Caco-2 (cell line): ENCODE measurements at regions of chr6 and their contacts with region 1.

Region 1: DNA sequence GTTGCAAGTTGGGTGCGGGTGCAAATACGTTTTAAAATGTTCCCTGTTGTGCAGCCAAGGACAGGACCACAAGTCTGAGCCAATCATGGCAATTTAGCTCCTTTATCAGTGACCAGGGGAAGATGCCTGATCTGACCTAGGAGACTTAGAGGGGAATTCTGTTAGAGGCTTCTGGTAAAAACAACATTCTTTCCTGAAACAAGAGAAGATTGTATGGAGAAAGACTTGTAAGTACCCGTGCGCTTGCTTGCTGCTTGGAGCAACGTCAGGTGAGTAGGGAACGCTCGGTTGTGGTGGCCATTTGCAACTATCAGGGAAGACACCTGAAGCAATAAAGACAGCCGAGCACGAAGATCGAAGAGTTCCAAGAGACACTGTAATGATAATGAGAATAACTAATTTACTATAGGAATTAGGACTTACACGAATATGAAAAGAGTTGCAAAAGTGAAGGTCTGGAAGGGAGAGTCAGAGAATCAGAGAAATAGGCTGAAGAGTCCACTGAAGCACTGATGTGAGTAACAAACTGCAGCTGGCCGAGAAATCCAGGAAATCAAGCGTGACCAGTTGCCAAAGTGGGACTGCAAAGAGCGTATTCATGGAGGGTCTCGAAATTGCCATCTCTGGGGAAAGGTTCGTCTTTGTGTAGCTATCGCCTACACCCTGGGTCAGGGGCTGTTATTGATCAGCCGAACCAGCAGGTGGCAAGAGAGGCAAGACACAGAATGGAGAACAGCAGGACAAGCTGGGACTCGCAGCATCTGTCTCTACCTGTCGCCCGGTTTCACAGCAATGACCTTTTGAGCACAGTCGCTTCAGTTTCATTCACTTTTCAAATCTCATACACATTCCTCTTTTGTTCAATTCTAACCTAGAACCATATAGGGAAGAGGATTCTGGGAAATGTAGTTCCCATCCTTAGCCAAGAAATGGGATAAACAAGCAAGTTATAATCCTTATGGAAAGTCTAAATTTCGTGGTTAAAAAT is 26.1 kb downstream of the LOC128125822 start:
- DNase-seq: peak; percentile 87 to 88
- H3K4me3 ChIP-seq: peak overlapping the region; percentile 59
- H3K4me3 Mint-ChIP-seq: peak overlapping the region; percentile 99
- H3K27ac Mint-ChIP-seq: peak overlapping the region; percentile 93
- H3K4me1 ChIP-seq: peaks cover 3% of the 10 kb centered on the region; the same call in 1 of the 2 replicates
- H3K4me1 Mint-ChIP-seq: peaks cover 6% of the 10 kb centered on the region
- H3K27me3 ChIP-seq: no peaks in the 10 kb centered on the region
- H3K27me3 Mint-ChIP-seq: no peaks in the 10 kb centered on the region
- CTCF ChIP-seq: peak; percentile 86 to 91

Region 2: DNA sequence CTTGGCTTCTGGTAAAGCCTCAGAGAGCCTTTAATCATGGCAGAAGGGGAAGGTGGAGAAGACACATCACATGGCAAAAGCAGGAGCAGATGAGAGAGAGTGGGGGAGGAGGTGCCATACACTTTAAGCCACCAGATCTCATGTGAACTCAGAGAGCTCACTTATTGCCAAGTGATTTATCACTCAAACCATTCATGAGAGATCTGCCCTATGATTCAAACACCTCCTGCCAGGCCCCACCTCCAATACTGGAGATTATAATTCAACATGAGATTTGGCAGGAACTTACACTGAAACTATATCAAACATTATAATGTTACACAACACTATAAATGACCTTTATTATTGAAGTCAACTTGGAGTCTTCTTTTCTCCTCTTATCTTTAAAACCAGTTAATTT is 339.2 kb before region 1 on chr6:
- CTCF ChIA-PET with region 1: no interaction called
- POLR2A ChIA-PET with region 1: no interaction called
- intact Hi-C with region 1: no loop called
- DNase-seq: no peak
- H3K4me3 ChIP-seq: no peak overlapping the region
- H3K4me3 Mint-ChIP-seq: no peak overlapping the region
- H3K27ac Mint-ChIP-seq: no peak overlapping the region
- H3K4me1 ChIP-seq: no peaks in the 10 kb centered on the region
- H3K4me1 Mint-ChIP-seq: no peaks in the 10 kb centered on the region
- H3K27me3 ChIP-seq: no peaks in the 10 kb centered on the region
- H3K27me3 Mint-ChIP-seq: no peaks in the 10 kb centered on the region
- CTCF ChIP-seq: no peak

Region 3: GRCh38 chr6:63635588-63636517 is 37.5 kb after region 1 on chr6 and contains the start of gene PHF3:
- CTCF ChIA-PET with region 1: interaction called, 11 read pairs
- POLR2A ChIA-PET with region 1: interaction called, 3 read pairs
- intact Hi-C with region 1: loop called (anchors 1 kb)
- DNase-seq: peak; percentile 92 to 94
- H3K4me3 ChIP-seq: peak within 1 kb of the TSS; percentile 85
- H3K4me3 Mint-ChIP-seq: peak within 1 kb of the TSS; percentile 100
- H3K27ac Mint-ChIP-seq: peak within 1 kb of the TSS; percentile 96
- H3K4me1 ChIP-seq: no peaks in the 10 kb centered on the region; the same call in 1 of the 2 replicates
- H3K4me1 Mint-ChIP-seq: peaks cover 8% of the 10 kb centered on the region
- H3K27me3 ChIP-seq: no peaks in the 10 kb centered on the region
- H3K27me3 Mint-ChIP-seq: no peaks in the 10 kb centered on the region
- CTCF ChIP-seq: peak in 1 of 2 experiments; percentile 31
- total RNA-seq, gene PHF3: 41.6 and 48.3 TPM in 2 replicates

Region 4: DNA sequence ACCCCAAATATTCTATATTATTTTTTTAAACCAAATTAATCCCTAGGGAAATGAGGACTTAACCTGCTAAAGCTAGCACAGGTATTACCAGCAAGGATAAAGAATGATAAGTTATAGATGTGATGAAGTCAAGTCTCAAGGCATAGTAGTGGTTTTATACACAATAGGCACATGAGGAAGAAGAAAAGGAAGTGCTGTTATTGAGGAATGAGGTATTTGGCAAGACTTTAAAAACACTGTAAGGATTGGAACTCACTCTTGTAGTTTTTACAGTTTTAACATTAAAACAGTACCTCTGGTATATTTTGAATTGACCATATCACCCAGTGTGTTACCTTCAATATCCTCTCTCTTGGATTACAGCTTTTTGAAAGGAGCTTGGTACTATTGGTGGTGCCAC is 91.9 kb after region 1 on chr6:
- CTCF ChIA-PET with region 1: no interaction called
- POLR2A ChIA-PET with region 1: no interaction called
- intact Hi-C with region 1: loop called (anchors 10 kb)
- DNase-seq: no peak
- H3K4me3 ChIP-seq: no peak overlapping the region
- H3K4me3 Mint-ChIP-seq: no peak overlapping the region
- H3K27ac Mint-ChIP-seq: no peak overlapping the region
- H3K4me1 ChIP-seq: no peaks in the 10 kb centered on the region
- H3K4me1 Mint-ChIP-seq: no peaks in the 10 kb centered on the region
- H3K27me3 ChIP-seq: no peaks in the 10 kb centered on the region
- H3K27me3 Mint-ChIP-seq: no peaks in the 10 kb centered on the region
- CTCF ChIP-seq: no peak

Region 5: DNA sequence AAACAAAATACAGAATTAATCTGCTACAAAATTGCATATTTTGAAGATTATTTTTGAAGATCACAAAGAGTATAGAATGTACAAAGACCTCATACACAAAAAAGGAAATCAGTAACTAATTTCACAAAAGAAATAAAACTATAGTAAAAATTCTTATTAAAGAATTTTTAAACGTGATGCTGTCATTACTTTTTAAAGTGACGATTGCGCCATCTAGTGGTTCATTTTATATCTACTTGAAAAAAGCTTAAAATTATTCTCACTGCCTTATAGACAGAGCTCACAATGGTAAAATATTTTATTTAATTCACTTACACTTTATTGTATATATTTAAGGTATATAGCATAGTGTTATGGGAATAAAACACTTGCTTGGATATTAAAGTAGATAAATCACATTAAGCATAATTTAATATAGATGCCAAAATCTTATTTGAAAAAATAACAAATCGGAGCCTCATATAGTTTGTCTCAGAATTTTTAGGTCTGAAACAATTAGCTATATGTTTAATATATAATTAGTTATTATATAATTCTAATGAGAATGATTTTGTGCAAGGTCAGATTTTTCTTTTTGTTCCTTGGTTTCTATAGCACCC is 166.1 kb after region 1 on chr6:
- CTCF ChIA-PET with region 1: interaction called, 35 read pairs
- POLR2A ChIA-PET with region 1: no interaction called
- intact Hi-C with region 1: loop called (anchors 1 kb)
- DNase-seq: peak in 1 of 2 experiments; percentile 36
- H3K4me3 ChIP-seq: no peak overlapping the region
- H3K4me3 Mint-ChIP-seq: no peak overlapping the region
- H3K27ac Mint-ChIP-seq: no peak overlapping the region
- H3K4me1 ChIP-seq: no peaks in the 10 kb centered on the region
- H3K4me1 Mint-ChIP-seq: no peaks in the 10 kb centered on the region
- H3K27me3 ChIP-seq: no peaks in the 10 kb centered on the region
- H3K27me3 Mint-ChIP-seq: no peaks in the 10 kb centered on the region
- CTCF ChIP-seq: peak; percentile 29 to 44

Region 6: GRCh38 chr6:63802606-63803206 is 204.4 kb after region 1 on chr6:
- CTCF ChIA-PET with region 1: interaction called, 19 read pairs
- POLR2A ChIA-PET with region 1: no interaction called
- intact Hi-C with region 1: loop called (anchors 1 kb)
- DNase-seq: no peak
- H3K4me3 ChIP-seq: no peak overlapping the region
- H3K4me3 Mint-ChIP-seq: no peak overlapping the region
- H3K27ac Mint-ChIP-seq: no peak overlapping the region
- H3K4me1 ChIP-seq: 0 out of 2 replicates have a peak, but pooled peaks cover 4% of the 10 kb centered on the region
- H3K4me1 Mint-ChIP-seq: no peaks in the 10 kb centered on the region
- H3K27me3 ChIP-seq: no peaks in the 10 kb centered on the region
- H3K27me3 Mint-ChIP-seq: no peaks in the 10 kb centered on the region
- CTCF ChIP-seq: peak; percentile 56 to 62